ENCODE measurements at regions of chr12 and their contacts with region 1.

Region 1: GRCh38 chr12:111741235-111741812 is 25.4 kb upstream of the ALDH2 start:
- H3K4me3 ChIP-seq: no peak overlapping the region
- H3K27ac ChIP-seq: no peak overlapping the region
- H3K4me1 ChIP-seq: peaks cover 6% of the 10 kb centered on the region
- CTCF ChIP-seq: no peak

Region 2: GRCh38 chr12:111643427-111643826 is 97.9 kb before region 1 on chr12:
- CTCF ChIA-PET with region 1: no interaction called
- POLR2A ChIA-PET with region 1: no interaction called
- H3K4me3 ChIP-seq: no peak overlapping the region
- H3K27ac ChIP-seq: peak overlapping the region; percentile 88
- H3K4me1 ChIP-seq: peaks cover 18% of the 10 kb centered on the region
- CTCF ChIP-seq: no peak

Region 3: GRCh38 chr12:111730420-111730819 is 10.9 kb before region 1 on chr12:
- CTCF ChIA-PET with region 1: no interaction called
- POLR2A ChIA-PET with region 1: interaction called, 13 read pairs
- H3K4me3 ChIP-seq: no peak overlapping the region
- H3K27ac ChIP-seq: no peak overlapping the region
- H3K4me1 ChIP-seq: no peaks in the 10 kb centered on the region; the same call in 1 of the 2 replicates
- CTCF ChIP-seq: no peak

Measured in HEK293 (cell line).